ENCODE measurements at regions of chr12 and their contacts with region 1.

Region 1: DNA sequence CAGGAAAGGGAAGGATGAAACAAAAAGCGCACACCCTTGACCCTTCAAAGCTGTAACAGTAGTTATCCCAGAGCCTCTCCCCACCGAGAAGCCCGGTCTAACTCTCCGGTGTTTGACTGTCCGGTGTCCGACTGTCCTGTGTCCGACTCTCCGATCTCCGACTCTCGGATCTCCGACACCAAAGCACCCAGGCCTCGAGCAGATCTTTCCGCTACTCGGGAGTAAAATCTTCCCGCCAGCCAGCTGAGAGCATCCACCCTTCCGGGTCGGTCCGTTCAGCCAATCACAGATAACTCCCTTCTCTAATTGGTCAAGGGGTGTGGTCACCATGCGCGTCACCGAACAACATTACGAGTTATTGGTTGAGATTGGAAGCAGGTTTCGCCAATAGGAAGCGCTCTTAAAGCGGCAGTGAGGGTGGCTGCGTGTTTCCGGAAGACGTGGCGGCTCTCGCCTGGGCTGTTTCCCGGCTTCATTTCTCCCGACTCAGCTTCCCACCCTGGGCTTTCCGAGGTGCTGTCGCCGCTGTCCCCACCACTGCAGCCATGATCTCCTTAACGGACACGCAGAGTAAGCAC is at the starts of genes GOLT1B and RECQL:
- DNase-seq: peak; percentile 92 to 98 (median 97)
- H3K4me3 ChIP-seq: peak within 1 kb of the TSS; percentile 70 to 99 (median 94)
- H3K27ac ChIP-seq: peak within 1 kb of the TSS; percentile 84 to 95 (median 88)
- H3K4me1 ChIP-seq: peaks cover 26 to 60% of the 10 kb centered on the region in 2 donors
- H3K27me3 ChIP-seq: no peaks in the 10 kb centered on the region
- CTCF ChIP-seq: no peak
- POLR2A ChIP-seq: peak; percentile 8 to 82
- total RNA-seq, gene GOLT1B: 12.9 to 51.1 (median 37.9) TPM
- total RNA-seq, gene RECQL: 15.5 to 42.1 (median 29.8) TPM

Region 2: GRCh38 chr12:21657326-21658077 is 156.0 kb after region 1 on chr12 and contains the start of gene LDHB:
- intact Hi-C with region 1: loop called in 1 of 2 experiments (anchors 10 kb)
- DNase-seq: peak; percentile 93 to 98 (median 96)
- H3K4me3 ChIP-seq: peak within 1 kb of the TSS; percentile 54 to 87 (median 77)
- H3K27ac ChIP-seq: peak within 1 kb of the TSS; percentile 42 to 92 (median 89)
- H3K4me1 ChIP-seq: peaks cover 3 to 18% of the 10 kb centered on the region in 2 donors
- H3K27me3 ChIP-seq: no peaks in the 10 kb centered on the region
- CTCF ChIP-seq: peak in 1 of 6 experiments; percentile 3
- POLR2A ChIP-seq: peak; percentile 83 to 94
- total RNA-seq, gene LDHB: 459 to 1,272 (median 604) TPM